ENCODE measurements at regions of chr20 and their contacts with region 1.

Region 1: GRCh38 chr20:62025832-62026563 is 39.7 kb downstream of the TAF4 start:
- DNase-seq: peak in 1 of 3 donors; percentile 73
- ATAC-seq: peak; percentile 76 to 82
- H3K4me3 ChIP-seq: no peak overlapping the region
- H3K27ac ChIP-seq: no peak overlapping the region
- H3K4me1 ChIP-seq: peaks cover 4% of the 10 kb centered on the region
- H3K27me3 ChIP-seq: no peaks in the 10 kb centered on the region

Region 2: GRCh38 chr20:62143118-62143973 is 117.3 kb after region 1 on chr20 and contains the starts of genes PSMA7 and SS18L1:
- intact Hi-C with region 1: loop called in 3 of 4 experiments (anchors 5 kb)
- DNase-seq: peak; percentile 88 to 95 (median 95)
- ATAC-seq: peak; percentile 93 to 94
- H3K4me3 ChIP-seq: peak within 1 kb of the TSS; percentile 80
- H3K27ac ChIP-seq: peak within 1 kb of the TSS; percentile 95
- H3K4me1 ChIP-seq: peaks cover 16% of the 10 kb centered on the region
- H3K27me3 ChIP-seq: no peaks in the 10 kb centered on the region
- total RNA-seq, gene PSMA7: 178 to 215 (median 206) TPM
- total RNA-seq, gene SS18L1: 7.8 to 8.8 (median 8.1) TPM

Measured in right cardiac atrium (tissue), 5 donors.